ENCODE measurements at regions of chr2 and their contacts with region 1.

Region 1: DNA sequence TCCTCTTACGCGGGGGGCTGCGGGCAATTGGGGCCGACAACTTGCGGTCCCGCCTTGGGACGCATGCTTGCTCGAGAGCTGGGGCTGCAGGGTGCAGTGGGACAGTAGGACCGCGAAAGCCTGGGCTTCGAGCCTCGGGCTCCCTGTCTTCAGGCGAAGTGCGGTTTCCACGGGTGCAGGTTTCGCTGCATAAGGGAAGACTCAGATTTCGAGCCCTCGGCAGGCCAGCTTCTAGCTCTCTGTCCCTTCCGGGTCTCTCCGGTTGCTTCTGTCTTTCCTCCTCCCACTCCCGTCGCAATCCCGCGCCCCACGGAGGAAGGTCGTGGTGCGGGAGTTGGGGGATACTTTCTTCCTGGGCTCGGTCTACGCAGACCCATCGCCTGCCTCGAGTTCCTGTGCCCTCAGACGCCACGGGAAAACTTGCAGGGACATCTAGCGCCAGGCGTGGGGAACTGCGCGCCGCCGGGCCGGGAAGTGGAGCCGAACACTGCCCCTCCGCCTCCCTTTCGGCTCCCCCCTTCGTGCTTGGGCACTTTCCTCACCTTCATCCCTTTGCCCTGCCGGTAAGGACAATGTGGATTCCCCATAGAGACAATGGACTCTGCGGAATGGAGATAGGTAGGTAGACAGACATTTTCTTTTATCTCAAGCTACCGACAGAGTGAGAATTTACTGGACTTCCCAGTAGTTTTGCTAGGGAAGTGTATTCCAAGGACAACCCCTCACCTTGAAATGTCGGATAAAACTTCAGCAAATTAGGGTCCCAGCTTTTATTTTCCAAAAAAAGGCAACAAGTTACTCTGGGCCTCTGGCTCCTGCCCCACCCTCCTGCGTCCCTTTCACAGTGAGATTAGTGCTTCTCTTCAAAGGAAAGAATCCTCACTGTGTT is 4.2 kb upstream of the HOXD13 start:
- DNase-seq: peak; percentile 61
- ATAC-seq: peak; percentile 82
- H3K4me3 ChIP-seq: peak overlapping the region; percentile 72
- H3K27ac ChIP-seq: no peak overlapping the region
- H3K4me1 ChIP-seq: peaks cover 12% of the 10 kb centered on the region
- H3K27me3 ChIP-seq: peaks cover 60% of the 10 kb centered on the region
- CTCF ChIP-seq: peak; percentile 81

Region 2: DNA sequence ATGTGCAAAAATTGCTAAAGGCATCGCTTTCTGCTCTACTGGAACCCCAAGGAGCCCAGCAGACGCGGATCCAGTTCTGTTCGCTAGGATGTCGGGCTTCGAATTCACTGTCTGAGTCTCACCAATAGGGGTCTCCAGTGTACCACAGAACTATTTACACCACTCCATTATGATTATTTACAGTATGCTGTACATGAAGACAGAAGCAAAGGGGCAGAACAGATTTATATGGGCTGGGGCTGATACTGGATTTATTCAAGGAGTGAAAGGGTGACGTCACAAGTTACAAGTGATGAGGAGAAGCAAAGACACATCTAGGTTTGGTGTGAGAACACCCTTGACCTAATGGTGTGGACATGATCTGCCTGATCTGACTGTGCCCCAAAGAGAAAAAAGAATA is 721.5 kb before region 1 on chr2:
- CTCF ChIA-PET with region 1: no interaction called
- POLR2A ChIA-PET with region 1: no interaction called
- intact Hi-C with region 1: loop called (anchors 2 kb)
- DNase-seq: peak; percentile 72
- ATAC-seq: peak; percentile 83
- H3K4me3 ChIP-seq: no peak overlapping the region
- H3K27ac ChIP-seq: no peak overlapping the region
- H3K4me1 ChIP-seq: peaks cover 8% of the 10 kb centered on the region
- H3K27me3 ChIP-seq: peaks cover 36% of the 10 kb centered on the region
- CTCF ChIP-seq: peak; percentile 90

Region 3: DNA sequence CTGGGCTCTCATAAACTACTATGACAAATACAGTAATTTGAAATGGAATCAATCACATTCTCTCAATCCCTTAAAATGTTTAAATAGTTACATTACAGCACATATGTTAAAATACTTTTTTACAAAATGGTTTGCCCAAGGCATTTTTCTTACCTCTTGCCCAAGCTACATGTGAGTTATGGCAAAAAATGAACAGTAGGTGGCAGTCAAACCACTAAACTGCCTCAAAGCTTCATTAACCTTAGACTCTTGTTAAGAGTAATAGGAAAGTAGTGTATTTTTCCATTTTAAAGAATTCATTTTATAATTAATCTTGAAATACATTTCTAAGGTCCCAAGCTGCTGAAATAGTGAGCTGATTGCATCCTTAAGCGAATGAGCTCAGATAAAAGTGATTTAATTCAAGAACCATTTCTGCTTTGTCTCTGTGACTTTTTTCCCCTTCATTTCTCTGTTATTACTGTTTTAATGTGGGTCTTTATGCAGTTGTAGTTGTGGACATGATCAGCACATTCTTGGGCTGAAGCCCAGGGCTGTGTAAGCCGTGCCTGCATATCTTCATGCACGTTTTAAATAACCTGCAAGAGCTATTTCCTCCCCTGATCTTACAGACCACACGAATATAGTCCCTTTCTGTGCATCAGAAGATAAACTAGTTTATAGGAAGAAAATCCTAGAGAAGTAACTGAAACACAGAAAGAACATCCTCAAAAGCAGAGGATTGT is 398.0 kb before region 1 on chr2:
- CTCF ChIA-PET with region 1: interaction called, 7 read pairs
- POLR2A ChIA-PET with region 1: no interaction called
- intact Hi-C with region 1: loop called (anchors 1 kb)
- DNase-seq: peak; percentile 86
- ATAC-seq: peak; percentile 82
- H3K4me3 ChIP-seq: no peak overlapping the region
- H3K27ac ChIP-seq: no peak overlapping the region
- H3K4me1 ChIP-seq: no peaks in the 10 kb centered on the region
- H3K27me3 ChIP-seq: peaks cover 42% of the 10 kb centered on the region
- CTCF ChIP-seq: peak; percentile 74

Region 4: DNA sequence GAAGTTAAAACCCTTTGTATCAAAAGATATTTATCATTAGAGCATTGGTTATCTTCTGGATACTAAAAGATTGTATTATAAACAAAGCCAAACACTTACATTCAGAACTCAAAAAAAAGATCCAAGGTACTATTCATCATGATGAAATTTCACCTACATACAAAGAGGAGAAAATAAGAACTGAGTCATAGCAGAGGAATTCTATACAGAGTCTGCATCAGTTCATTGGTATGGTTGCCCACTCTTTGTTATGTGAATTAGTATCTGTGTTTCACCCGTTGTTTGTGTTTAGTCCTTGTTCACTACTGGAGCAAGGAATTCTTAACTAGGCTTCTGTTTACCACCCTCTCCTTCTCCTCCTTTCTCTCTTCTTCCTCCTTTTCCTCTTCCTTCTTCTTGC is 244.1 kb before region 1 on chr2:
- CTCF ChIA-PET with region 1: no interaction called
- POLR2A ChIA-PET with region 1: no interaction called
- intact Hi-C with region 1: loop called (anchors 5 kb)
- DNase-seq: peak; percentile 87
- ATAC-seq: peak; percentile 97
- H3K4me3 ChIP-seq: no peak overlapping the region
- H3K27ac ChIP-seq: peak overlapping the region; percentile 2; the same call in 1 of the 2 replicates
- H3K4me1 ChIP-seq: peaks cover 20% of the 10 kb centered on the region
- H3K27me3 ChIP-seq: no peaks in the 10 kb centered on the region
- CTCF ChIP-seq: no peak

Region 5: GRCh38 chr2:175964195-175964594 is 124.1 kb before region 1 on chr2:
- CTCF ChIA-PET with region 1: no interaction called
- POLR2A ChIA-PET with region 1: no interaction called
- intact Hi-C with region 1: loop called (anchors 1 kb)
- DNase-seq: peak; percentile 27
- ATAC-seq: peak; percentile 64
- H3K4me3 ChIP-seq: no peak overlapping the region
- H3K27ac ChIP-seq: no peak overlapping the region
- H3K4me1 ChIP-seq: 0 out of 2 replicates have a peak, but pooled peaks cover 4% of the 10 kb centered on the region
- H3K27me3 ChIP-seq: no peaks in the 10 kb centered on the region
- CTCF ChIP-seq: peak; percentile 50

Region 6: DNA sequence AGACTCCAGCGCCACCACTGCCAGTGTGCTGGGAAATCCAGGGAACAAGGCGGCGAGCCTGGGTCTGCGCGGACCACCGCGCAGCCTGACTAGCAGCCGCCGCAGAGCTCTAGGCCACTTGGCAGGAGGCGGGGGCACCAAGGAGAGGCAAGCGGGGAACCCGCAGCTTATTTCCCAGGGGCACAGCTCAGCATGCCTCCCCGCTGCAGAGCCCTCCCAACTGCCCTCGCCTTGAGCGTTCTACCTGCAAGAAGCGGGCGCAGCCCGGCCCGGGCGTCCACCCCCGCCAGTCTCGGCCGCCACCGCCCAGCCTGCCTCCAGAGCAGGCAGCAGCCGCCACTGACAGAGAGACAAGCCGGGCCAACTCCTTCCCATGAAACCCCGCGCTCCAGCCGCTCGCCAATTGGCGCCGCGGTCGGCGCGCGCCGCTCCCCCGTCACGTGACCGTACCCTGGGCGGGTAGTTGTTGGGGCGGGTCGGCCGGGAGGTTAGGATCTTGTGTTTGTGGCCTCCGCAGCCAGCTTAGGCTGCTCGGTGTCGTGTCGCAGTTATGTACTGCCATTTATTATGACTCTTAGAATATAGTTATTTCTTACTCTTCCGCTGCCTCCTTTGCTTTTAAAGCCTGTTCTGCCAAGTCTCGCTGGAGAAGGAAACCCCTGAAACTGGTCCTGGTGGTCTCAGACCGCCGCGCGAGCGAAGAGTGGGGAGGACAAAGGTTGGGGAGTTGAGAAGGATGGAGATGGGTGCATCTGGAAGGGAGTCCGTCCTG is 86.2 kb before region 1 on chr2 and contains the start of gene LNPK:
- CTCF ChIA-PET with region 1: interaction called, 3 read pairs
- POLR2A ChIA-PET with region 1: no interaction called
- intact Hi-C with region 1: loop called (anchors 5 kb)
- DNase-seq: peak; percentile 92
- ATAC-seq: peak; percentile 92
- H3K4me3 ChIP-seq: peak within 1 kb of the TSS; percentile 86
- H3K27ac ChIP-seq: no peak within 1 kb of the TSS
- H3K4me1 ChIP-seq: peaks cover 11% of the 10 kb centered on the region
- H3K27me3 ChIP-seq: no peaks in the 10 kb centered on the region
- CTCF ChIP-seq: no peak
- total RNA-seq, gene LNPK: 19.5 and 21.9 TPM in 2 replicates

Region 7: GRCh38 chr2:176126929-176127773 is 38.9 kb after region 1 on chr2:
- CTCF ChIA-PET with region 1: no interaction called
- POLR2A ChIA-PET with region 1: no interaction called
- intact Hi-C with region 1: no loop called
- DNase-seq: peak; percentile 78
- ATAC-seq: 0 out of 2 replicates have a peak, but pooled peaks have one; percentile 14
- H3K4me3 ChIP-seq: peak overlapping the region; percentile 62
- H3K27ac ChIP-seq: no peak overlapping the region
- H3K4me1 ChIP-seq: peaks cover 10% of the 10 kb centered on the region
- H3K27me3 ChIP-seq: no peaks in the 10 kb centered on the region
- CTCF ChIP-seq: peak; percentile 93

Region 8: DNA sequence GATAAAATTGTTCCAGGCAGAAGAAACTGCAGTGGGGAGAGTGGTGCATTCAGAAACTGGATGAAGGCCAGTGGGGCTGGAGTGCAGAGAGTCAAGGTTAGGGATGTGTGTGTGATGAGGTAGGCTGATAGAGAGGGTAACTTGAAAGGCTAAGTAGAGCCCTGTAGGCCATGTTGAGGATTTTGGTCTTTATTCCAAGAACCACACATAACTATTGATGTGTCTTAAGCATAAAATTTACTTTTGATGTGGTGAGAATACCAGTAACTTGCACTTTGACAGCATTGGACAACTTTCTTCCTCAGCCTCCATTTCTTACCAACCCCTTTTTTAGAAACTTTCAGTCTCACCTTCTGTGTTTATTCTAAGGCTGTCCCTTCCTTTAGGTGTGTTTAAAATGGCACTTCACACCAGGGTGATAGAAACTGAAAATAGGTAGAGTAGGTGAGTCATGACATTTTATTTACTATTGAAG is 203.6 kb after region 1 on chr2:
- CTCF ChIA-PET with region 1: no interaction called
- POLR2A ChIA-PET with region 1: no interaction called
- intact Hi-C with region 1: no loop called
- DNase-seq: peak; percentile 50
- ATAC-seq: peak; percentile 93
- H3K4me3 ChIP-seq: no peak overlapping the region
- H3K27ac ChIP-seq: peak overlapping the region; percentile 14; the same call in 1 of the 2 replicates
- H3K4me1 ChIP-seq: peaks cover 19% of the 10 kb centered on the region
- H3K27me3 ChIP-seq: no peaks in the 10 kb centered on the region
- CTCF ChIP-seq: no peak